Breast epithelium (tissue), 4 donors: ENCODE measurements at regions of chr14 and their contacts with region 1.

Region 1: GRCh38 chr14:53391151-53391550 is 238.0 kb upstream of the DDHD1 start:
- DNase-seq: no peak
- H3K4me3 ChIP-seq: no peak overlapping the region
- H3K27ac ChIP-seq: no peak overlapping the region
- H3K4me1 ChIP-seq: no peaks in the 10 kb centered on the region
- H3K27me3 ChIP-seq: no peaks in the 10 kb centered on the region
- CTCF ChIP-seq: no peak
- POLR2A ChIP-seq: no peak

Region 2: GRCh38 chr14:54535126-54535525 is 1144.0 kb after region 1 on chr14:
- intact Hi-C with region 1: loop called (anchors 5 kb)
- DNase-seq: no peak
- H3K4me3 ChIP-seq: no peak overlapping the region
- H3K27ac ChIP-seq: no peak overlapping the region
- H3K4me1 ChIP-seq: no peaks in the 10 kb centered on the region
- H3K27me3 ChIP-seq: no peaks in the 10 kb centered on the region
- CTCF ChIP-seq: no peak
- POLR2A ChIP-seq: no peak